Heart left ventricle (tissue), 16 donors: ENCODE measurements at regions of chr1 and their contacts with region 1.

Region 1: GRCh38 chr1:92291372-92291999 is 7.3 kb downstream of the GLMN start:
- DNase-seq: no peak
- ATAC-seq: peak in 2 of 4 donors; percentile 54 to 65
- H3K4me3 ChIP-seq: no peak overlapping the region
- H3K27ac ChIP-seq: no peak overlapping the region
- H3K4me1 ChIP-seq: no peaks in the 10 kb centered on the region
- H3K27me3 ChIP-seq: no peaks in the 10 kb centered on the region
- CTCF ChIP-seq: peak; percentile 40 to 70 (median 57)
- POLR2A ChIP-seq: no peak

Region 2: DNA sequence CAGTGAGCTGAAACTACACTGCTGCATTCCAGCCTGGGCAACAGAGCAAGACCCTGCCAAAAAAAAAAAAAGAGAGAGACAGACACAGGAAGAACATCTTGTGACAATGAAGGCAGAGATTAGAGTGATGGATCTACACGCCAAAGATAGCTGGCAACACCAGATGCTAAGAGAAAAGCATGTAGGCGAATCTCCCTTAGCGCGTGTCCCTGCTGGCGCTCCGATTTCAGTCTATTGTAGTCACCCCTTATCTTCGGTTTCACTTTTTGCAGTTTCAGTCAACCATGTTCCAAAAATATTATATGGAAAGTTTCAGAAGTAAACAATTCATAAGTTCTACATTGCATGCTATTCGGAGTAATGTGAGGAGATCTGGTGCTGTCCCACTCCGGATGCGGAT is 353.9 kb before region 1 on chr1:
- intact Hi-C with region 1: loop called in 1 of 10 experiments (anchors 5 kb)
- DNase-seq: no peak
- ATAC-seq: no peak
- H3K4me3 ChIP-seq: no peak overlapping the region
- H3K27ac ChIP-seq: no peak overlapping the region
- H3K4me1 ChIP-seq: no peaks in the 10 kb centered on the region
- H3K27me3 ChIP-seq: no peaks in the 10 kb centered on the region
- CTCF ChIP-seq: no peak
- POLR2A ChIP-seq: no peak

Region 3: DNA sequence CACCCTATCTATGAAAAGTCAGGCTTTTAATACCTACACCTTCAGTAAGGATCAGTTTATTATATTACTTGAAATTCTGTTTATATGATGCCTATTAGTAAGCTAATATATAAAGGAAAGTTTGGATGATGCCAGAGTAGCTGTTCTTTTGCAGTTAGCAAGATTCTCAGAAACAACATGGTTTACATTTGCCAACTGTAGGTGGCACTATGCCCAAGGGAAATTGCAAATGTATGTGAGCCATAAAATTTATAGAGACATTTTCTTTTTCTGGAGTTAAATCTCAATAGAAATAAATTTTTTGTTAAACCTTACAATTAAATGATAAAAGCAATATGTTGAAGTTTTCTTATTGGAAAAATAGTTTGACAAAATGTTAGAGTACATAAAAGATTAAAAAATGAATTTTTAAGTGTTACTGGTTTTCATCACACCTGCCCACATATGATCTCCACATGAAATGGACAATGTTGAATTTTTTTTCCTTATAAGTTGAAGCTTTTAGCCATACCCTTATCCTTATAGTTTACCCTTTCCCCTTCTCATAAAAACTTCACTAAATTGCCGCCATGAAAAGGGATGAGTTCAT is 293.8 kb before region 1 on chr1:
- intact Hi-C with region 1: loop called in 7 of 10 experiments (anchors 2 to 10 kb)
- DNase-seq: peak in 1 of 5 donors; percentile 7
- ATAC-seq: no peak
- H3K4me3 ChIP-seq: no peak overlapping the region
- H3K27ac ChIP-seq: no peak overlapping the region
- H3K4me1 ChIP-seq: no peaks in the 10 kb centered on the region
- H3K27me3 ChIP-seq: no peaks in the 10 kb centered on the region
- CTCF ChIP-seq: peak in 11 of 12 donors; percentile 10 to 60 (median 42)
- POLR2A ChIP-seq: no peak

Region 4: DNA sequence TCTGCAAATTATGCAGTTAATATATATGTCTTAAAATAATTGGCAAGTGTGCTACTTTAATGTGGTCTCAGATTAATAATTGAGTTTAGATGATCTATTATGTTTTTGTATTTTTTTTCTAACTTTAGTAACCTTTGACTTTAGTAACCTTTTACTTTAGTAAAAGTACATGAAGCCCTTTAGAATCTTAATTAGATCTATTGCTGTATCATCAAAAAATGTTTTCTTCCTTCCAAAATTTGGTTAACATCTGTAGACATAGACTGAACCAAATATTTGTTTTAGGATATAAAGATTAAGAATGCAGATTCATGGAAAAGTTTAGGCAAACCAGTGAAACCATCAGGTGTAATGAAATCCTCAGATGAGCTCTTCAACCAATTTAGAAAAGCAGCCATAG is 287.4 kb before region 1 on chr1:
- intact Hi-C with region 1: loop called in 7 of 10 experiments (anchors 2 to 10 kb)
- DNase-seq: no peak
- ATAC-seq: no peak
- H3K4me3 ChIP-seq: no peak overlapping the region
- H3K27ac ChIP-seq: no peak overlapping the region
- H3K4me1 ChIP-seq: no peaks in the 10 kb centered on the region
- H3K27me3 ChIP-seq: no peaks in the 10 kb centered on the region
- CTCF ChIP-seq: no peak
- POLR2A ChIP-seq: no peak

Region 5: DNA sequence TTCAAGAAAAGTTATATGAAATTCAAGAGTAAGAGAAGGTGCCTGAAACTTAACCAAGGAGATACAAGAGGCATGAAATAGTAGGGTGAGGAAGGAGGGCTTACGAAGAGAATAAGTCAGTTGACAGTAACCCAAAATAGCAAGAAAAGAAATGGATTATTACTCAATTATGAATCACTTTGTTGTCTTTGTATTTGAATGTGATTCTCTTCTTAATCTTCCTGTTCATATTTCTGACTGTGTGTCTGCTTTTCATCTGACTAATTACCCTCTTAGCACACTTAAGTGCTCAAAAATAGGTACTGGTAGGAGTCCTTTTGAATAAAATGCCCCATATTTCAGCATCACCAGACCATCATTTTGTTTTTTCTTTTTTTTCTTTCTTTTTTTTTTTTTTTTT is 32.1 kb before region 1 on chr1:
- intact Hi-C with region 1: no loop called
- DNase-seq: no peak
- ATAC-seq: no peak
- H3K4me3 ChIP-seq: no peak overlapping the region
- H3K27ac ChIP-seq: no peak overlapping the region
- H3K4me1 ChIP-seq: no peaks in the 10 kb centered on the region
- H3K27me3 ChIP-seq: no peaks in the 10 kb centered on the region
- CTCF ChIP-seq: no peak
- POLR2A ChIP-seq: no peak